ENCODE measurements at regions of chr1 and their contacts with region 1.

Region 1: GRCh38 chr1:204868340-204868700 is 2.3 kb upstream of the NFASC start:
- DNase-seq: peak in 9 of 10 donors; percentile 65 to 90 (median 81)
- H3K4me3 ChIP-seq: peak overlapping the region in 12 of 59 donors; percentile 1 to 33 (median 16)
- H3K27ac ChIP-seq: peak overlapping the region; percentile 62 to 98 (median 94)
- H3K27me3 ChIP-seq: no peaks in the 10 kb centered on the region
- CTCF ChIP-seq: peak in 5 of 56 donors; percentile 9 to 23 (median 16)

Region 2: DNA sequence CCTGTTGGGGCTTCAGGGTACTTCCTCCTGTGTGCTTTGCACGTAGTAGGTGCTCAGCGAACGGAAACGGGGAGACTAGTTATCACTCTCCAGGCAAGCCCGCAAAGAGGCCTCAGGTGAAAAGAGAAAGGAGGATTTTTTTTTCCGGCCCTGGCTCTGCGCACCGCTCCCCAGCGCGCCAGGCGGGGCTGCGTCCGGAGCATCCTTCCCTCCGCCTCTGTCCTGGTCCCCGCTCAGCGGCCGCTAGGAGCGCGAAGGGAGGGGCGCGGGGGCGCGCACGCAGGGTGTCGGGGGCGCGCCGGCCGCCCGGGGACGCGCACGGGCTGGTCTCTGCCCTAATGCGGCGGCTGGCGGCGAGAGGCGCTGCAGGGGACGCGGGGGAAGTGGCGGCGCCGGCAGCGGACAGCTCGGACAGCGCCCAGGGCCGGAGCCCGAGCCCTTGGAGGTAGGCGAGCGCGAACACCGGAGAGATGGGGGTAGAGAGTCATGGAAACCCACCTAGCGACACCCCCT is 39.9 kb before region 1 on chr1:
- intact Hi-C with region 1: loop called (anchors 2 to 5 kb)
- DNase-seq: peak; percentile 76 to 93 (median 85)
- H3K4me3 ChIP-seq: peak overlapping the region; percentile 50 to 84 (median 74)
- H3K27ac ChIP-seq: peak overlapping the region in 58 of 59 donors; percentile 67 to 96 (median 92)
- H3K27me3 ChIP-seq: no peaks in the 10 kb centered on the region
- CTCF ChIP-seq: peak in 55 of 56 donors; percentile 22 to 75 (median 54)

Region 3: DNA sequence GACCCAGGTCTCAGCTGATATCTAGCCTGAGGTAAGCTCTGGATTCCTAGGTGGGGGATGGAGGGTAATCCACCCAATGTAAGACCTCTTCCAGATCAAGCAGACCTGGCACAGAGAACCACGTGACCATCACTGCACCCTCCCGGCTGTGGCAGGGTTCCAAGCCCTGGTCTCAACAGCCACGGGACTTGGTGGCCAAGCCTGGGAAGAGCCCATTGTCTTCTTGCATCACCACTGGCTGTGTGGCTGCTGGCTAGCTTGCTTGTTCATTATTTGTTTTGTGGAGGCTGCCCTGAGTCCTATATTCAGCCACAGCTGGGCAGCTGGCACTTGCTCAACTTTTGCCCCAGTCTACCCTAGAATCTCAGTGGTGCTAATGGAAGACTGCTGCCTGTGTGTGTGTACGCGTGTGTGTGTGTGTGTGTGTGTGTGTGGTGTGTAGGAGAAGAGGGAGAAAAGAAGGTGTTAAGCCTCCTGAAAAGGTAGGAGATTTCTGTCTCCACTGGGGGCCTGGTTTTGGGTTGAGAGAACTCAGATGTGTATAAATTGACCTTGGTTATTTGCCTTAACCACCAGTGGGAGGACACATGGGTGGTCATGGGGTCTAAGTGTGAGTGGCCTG is 21.7 kb before region 1 on chr1:
- intact Hi-C with region 1: loop called (anchors 1 to 2 kb)
- DNase-seq: peak; percentile 34 to 96 (median 87)
- H3K4me3 ChIP-seq: peak overlapping the region in 3 of 59 donors; percentile 7 to 8 (median 7)
- H3K27ac ChIP-seq: peak overlapping the region; percentile 38 to 97 (median 88)
- H3K27me3 ChIP-seq: no peaks in the 10 kb centered on the region
- CTCF ChIP-seq: peak in 5 of 56 donors; percentile 15 to 42 (median 19)

Region 4: DNA sequence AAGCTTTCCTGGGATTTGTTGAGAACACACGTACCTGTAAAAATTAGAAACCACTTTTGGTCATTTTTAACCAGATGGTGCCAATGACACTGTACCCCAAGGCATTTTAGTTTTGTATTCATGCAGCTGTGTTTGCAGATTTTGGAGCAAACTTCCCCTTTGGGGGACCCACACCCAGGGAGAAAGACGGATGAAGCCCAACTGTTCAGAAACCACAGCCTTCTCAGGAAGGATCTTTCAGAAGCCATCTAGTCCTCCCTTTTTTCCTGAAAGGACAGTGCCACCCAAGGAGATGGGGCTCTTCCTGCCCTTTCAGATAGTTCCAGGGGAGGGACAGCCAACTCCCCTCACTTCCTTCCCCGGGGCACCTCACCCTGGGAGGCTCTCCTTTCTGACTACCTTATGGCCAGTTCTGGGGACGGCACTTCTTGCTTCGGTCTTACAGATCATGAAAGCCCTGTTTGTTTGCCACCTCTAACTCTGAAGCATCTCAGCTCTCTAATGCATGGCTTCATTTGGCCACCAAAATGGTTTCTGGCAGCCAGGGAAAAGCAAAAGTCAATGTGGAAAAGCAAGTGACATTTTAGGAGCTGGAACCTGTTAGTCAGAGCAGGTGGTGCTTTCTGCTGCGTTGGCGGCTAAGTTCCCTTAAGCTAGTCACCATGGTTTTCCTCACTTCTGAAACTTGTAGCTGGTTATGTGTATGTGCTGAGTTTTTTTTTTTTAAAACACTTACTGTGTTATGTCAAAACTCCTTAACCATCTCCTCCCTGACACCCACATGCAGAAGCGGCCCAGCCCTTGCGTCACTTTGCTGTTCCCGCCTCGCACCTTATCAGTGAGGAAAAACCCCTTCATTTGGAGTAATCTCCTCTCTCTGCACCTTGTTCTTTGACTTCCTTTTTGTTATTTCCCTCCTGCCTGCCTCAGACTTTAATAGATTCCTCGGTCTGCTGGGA is 369.5 kb after region 1 on chr1:
- intact Hi-C with region 1: no loop called
- DNase-seq: peak in 3 of 10 donors; percentile 43 to 64 (median 57)
- H3K4me3 ChIP-seq: peak overlapping the region in 5 of 59 donors; percentile 6 to 27 (median 12)
- H3K27ac ChIP-seq: peak overlapping the region in 58 of 59 donors; percentile 21 to 100 (median 84)
- H3K27me3 ChIP-seq: no peaks in the 10 kb centered on the region
- CTCF ChIP-seq: no peak